ENCODE measurements at regions of chr20 and their contacts with region 1.

Region 1: GRCh38 chr20:35284267-35284991 is at the start of gene EIF6:
- DNase-seq: peak; percentile 93

Region 2: DNA sequence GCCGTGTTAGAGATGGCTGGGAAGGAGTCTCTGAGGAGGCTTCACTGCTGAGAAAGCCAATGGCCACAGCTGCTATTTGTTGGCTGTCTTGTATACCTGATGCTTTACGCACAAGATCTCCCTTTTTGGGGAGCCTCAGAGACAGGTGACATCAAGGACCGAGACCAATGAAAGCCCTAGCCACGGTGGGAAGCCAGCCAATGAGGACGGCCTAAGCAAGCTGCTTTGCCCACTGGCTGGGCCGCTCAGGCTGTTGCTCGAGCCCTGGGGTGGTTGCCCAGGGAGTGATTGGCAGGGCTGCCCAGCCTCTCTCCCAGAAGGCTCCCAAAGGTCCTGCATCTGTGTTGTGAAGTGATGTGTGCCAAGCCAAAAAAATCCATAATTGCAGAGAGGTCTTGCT is 11.0 kb before region 1 on chr20:
- CTCF ChIA-PET with region 1: no interaction called
- POLR2A ChIA-PET with region 1: interaction called, 11 read pairs
- DNase-seq: no peak

Region 3: GRCh38 chr20:35454881-35455609 is 170.6 kb after region 1 on chr20 and contains the start of gene CEP250:
- CTCF ChIA-PET with region 1: no interaction called
- POLR2A ChIA-PET with region 1: interaction called, 17 read pairs
- DNase-seq: peak; percentile 96

Measured in HEK293T (cell line).